ENCODE measurements at regions of chr5 and their contacts with region 1.

Region 1: GRCh38 chr5:75265731-75266130 is 29.1 kb upstream of the ANKRD31 start:
- DNase-seq: no peak
- ATAC-seq: peak; percentile 47
- H3K4me3 Mint-ChIP-seq: no peak overlapping the region
- H3K27ac Mint-ChIP-seq: no peak overlapping the region
- H3K4me1 Mint-ChIP-seq: no peaks in the 10 kb centered on the region
- H3K27me3 Mint-ChIP-seq: no peaks in the 10 kb centered on the region

Region 2: GRCh38 chr5:73902327-73903051 is 1363.2 kb before region 1 on chr5:
- CTCF ChIA-PET with region 1: no interaction called
- POLR2A ChIA-PET with region 1: no interaction called
- intact Hi-C with region 1: loop called in 1 of 2 experiments (anchors 10 kb)
- DNase-seq: no peak
- ATAC-seq: no peak
- H3K4me3 Mint-ChIP-seq: no peak overlapping the region
- H3K27ac Mint-ChIP-seq: no peak overlapping the region
- H3K4me1 Mint-ChIP-seq: peaks cover 7% of the 10 kb centered on the region
- H3K27me3 Mint-ChIP-seq: peaks cover 18% of the 10 kb centered on the region

Region 3: DNA sequence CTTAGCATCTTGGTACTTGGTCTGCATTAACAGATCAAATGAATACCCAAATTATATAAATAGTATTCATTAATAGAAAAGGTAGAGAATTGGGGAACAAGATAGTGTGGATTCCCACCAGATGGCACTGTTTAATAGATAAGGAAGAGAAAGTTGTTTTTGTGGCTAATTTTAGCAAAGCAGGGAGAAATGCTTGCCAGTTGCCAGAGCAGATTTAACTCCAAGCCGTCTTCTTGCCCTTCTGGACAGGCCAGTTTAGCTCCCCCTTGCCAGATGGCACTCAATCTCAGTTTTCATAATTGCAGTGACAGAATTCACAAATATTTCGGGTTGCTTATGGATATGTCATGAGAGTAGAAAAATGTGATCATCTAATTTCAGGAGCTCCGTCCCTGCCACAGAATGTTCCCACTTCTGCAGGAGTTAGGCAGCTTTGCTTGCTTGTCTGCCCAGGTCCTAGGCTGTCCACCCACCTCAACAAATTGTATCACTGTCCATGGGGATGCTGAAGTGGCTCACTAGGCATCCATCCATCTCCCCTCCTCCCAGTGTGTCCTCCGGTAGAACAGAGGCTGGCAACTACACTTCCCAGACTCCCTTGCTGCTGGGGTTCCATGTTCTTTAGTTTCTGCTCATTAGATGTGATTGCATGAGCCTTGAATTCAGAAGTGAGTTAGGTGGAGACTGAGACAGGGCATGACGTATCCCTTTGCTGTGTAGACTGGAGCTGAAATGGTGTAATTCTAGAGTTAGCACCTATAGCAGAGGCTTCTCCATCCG is 592.5 kb before region 1 on chr5:
- CTCF ChIA-PET with region 1: no interaction called
- POLR2A ChIA-PET with region 1: no interaction called
- intact Hi-C with region 1: loop called in 1 of 2 experiments (anchors 5 kb)
- DNase-seq: no peak
- ATAC-seq: no peak
- H3K4me3 Mint-ChIP-seq: no peak overlapping the region
- H3K27ac Mint-ChIP-seq: no peak overlapping the region
- H3K4me1 Mint-ChIP-seq: no peaks in the 10 kb centered on the region
- H3K27me3 Mint-ChIP-seq: peaks cover 12% of the 10 kb centered on the region

Region 4: DNA sequence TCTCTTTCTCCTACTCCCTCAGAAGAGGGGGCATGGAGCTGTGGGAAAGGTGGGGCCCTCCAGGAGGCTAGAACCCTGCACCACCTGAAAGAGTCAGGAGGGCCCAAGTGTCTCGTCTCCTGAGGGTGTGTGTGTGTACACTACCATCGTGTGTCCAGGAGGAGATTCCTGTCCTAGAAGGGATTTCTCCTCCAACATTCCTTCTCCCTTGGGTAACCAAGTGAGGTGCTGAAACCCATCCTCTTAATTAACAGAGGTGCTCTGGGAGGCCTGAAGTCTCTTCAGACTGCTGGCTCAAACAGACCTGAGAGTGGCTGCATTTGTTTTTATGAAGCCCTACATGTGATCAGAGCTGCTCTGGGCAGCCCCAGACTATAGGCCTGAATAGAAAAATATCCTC is 338.4 kb before region 1 on chr5:
- CTCF ChIA-PET with region 1: interaction called, 5 read pairs
- POLR2A ChIA-PET with region 1: no interaction called
- intact Hi-C with region 1: loop called in 1 of 2 experiments (anchors 10 kb)
- DNase-seq: no peak
- ATAC-seq: no peak
- H3K4me3 Mint-ChIP-seq: no peak overlapping the region
- H3K27ac Mint-ChIP-seq: no peak overlapping the region
- H3K4me1 Mint-ChIP-seq: no peaks in the 10 kb centered on the region
- H3K27me3 Mint-ChIP-seq: no peaks in the 10 kb centered on the region

Region 5: GRCh38 chr5:74934949-74935751 is 330.6 kb before region 1 on chr5:
- CTCF ChIA-PET with region 1: no interaction called
- POLR2A ChIA-PET with region 1: no interaction called
- intact Hi-C with region 1: loop called in 1 of 2 experiments (anchors 1 kb)
- DNase-seq: peak; percentile 34
- ATAC-seq: peak; percentile 95
- H3K4me3 Mint-ChIP-seq: peak overlapping the region; percentile 25
- H3K27ac Mint-ChIP-seq: peak overlapping the region; percentile 24
- H3K4me1 Mint-ChIP-seq: peaks cover 28% of the 10 kb centered on the region
- H3K27me3 Mint-ChIP-seq: peaks cover 2% of the 10 kb centered on the region